ENCODE measurements at regions of chr5 and their contacts with region 1.

Region 1: GRCh38 chr5:160199410-160199911 is 29.8 kb upstream of the FABP6 start:
- DNase-seq: peak; percentile 66 to 69
- H3K4me3 ChIP-seq: peak overlapping the region in 1 of 3 donors; percentile 25
- H3K27ac ChIP-seq: no peak overlapping the region
- H3K4me1 ChIP-seq: peaks cover 0 to 11% of the 10 kb centered on the region in 2 donors
- H3K27me3 ChIP-seq: no peaks in the 10 kb centered on the region
- CTCF ChIP-seq: peak; percentile 47 to 96 (median 92)
- POLR2A ChIP-seq: no peak

Region 2: GRCh38 chr5:159928122-159928909 is 271.1 kb before region 1 on chr5:
- intact Hi-C with region 1: no loop called
- DNase-seq: peak; percentile 90 to 94
- H3K4me3 ChIP-seq: no peak overlapping the region
- H3K27ac ChIP-seq: peak overlapping the region; percentile 50 to 67 (median 64)
- H3K4me1 ChIP-seq: peaks cover 10 to 16% of the 10 kb centered on the region in 2 donors
- H3K27me3 ChIP-seq: no peaks in the 10 kb centered on the region
- CTCF ChIP-seq: no peak
- POLR2A ChIP-seq: no peak

Region 3: GRCh38 chr5:160021831-160022446 is 177.5 kb before region 1 on chr5:
- intact Hi-C with region 1: loop called (anchors 5 kb)
- DNase-seq: peak; percentile 42 to 49
- H3K4me3 ChIP-seq: no peak overlapping the region
- H3K27ac ChIP-seq: no peak overlapping the region
- H3K4me1 ChIP-seq: peaks cover 7 to 15% of the 10 kb centered on the region in 2 donors
- H3K27me3 ChIP-seq: no peaks in the 10 kb centered on the region
- CTCF ChIP-seq: peak; percentile 64 to 89 (median 79)
- POLR2A ChIP-seq: no peak